ENCODE measurements at regions of chr5 and their contacts with region 1.

Region 1: DNA sequence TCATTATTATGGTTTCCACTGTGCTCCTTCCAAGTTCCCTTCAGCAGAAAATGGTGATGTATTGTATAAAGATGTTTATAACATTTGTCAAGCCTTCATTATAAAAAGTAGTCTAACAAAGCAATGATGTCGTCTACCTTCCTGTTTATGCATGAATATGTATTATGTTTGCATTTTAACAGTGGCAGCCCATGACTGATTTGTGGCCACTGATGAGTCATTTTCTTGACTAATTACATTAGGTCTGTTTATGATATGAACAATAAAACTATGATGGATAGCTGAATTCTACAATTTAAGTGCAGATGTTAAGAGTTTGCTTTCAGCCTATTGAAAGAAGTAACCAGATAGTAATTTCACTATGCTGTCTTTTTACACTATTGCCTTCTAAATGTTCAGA is 75.4 kb upstream of the ADAMTS19 start:
- DNase-seq: peak; percentile 25
- H3K4me3 Mint-ChIP-seq: no peak overlapping the region
- H3K27ac Mint-ChIP-seq: no peak overlapping the region
- H3K4me1 Mint-ChIP-seq: no peaks in the 10 kb centered on the region
- H3K27me3 Mint-ChIP-seq: peaks cover 14% of the 10 kb centered on the region
- CTCF ChIP-seq: no peak

Region 2: DNA sequence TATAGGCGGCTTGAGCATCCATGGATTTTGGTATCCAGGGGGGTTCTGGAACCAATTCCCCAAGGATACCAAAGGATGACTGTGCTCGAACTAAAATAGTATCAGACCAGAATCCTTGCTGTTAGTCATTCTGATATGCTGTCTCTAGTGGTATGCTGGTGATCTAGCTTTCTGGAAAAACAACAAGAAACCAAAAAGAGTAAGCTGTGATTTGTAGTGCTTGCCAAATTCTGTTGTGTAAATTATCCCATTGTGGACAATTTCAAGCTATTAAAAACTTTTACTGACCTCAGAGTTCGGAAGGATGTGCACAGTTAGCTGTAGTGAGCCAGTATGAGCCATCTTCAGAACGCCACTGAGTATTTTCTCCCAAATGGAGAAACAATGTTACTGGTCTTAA is 747.7 kb before region 1 on chr5:
- CTCF ChIA-PET with region 1: no interaction called
- POLR2A ChIA-PET with region 1: no interaction called
- intact Hi-C with region 1: no loop called
- DNase-seq: no peak
- H3K4me3 Mint-ChIP-seq: no peak overlapping the region
- H3K27ac Mint-ChIP-seq: no peak overlapping the region
- H3K4me1 Mint-ChIP-seq: peaks cover 5% of the 10 kb centered on the region
- H3K27me3 Mint-ChIP-seq: no peaks in the 10 kb centered on the region
- CTCF ChIP-seq: no peak

Region 3: DNA sequence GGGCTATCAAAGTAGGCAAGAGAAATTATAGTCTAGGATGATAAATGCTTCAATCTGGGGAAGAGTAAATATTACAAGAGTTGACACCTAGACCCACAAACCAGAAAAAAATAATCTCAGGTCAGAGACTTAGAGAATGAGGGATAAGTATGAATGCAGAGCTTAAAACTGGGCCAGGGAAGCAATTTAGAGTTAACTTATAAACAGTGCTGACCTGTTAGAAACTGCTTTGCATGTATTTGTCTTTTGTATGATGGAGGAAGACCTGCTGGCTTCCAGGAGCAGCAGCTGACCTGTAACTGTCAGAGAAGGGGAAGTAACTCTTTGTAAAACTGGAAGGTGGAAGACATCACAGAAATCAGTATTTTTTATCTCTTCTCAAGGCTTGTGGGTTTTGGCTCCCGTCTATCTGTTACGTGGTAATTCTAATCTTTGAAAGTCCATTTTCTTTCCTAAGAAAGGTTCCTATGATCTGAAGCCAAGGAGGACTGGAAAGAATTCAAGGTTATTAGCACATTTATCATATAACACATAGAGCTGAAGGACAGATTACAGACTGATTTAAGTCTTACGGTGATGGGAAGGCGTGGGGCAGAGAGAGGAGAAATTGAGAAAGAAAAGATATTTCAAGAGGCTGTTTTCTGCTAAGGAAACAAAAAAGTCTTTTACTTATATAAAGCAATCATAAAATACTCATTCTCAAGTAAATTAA is 39.4 kb before region 1 on chr5:
- CTCF ChIA-PET with region 1: no interaction called
- POLR2A ChIA-PET with region 1: no interaction called
- intact Hi-C with region 1: no loop called
- DNase-seq: no peak
- H3K4me3 Mint-ChIP-seq: no peak overlapping the region
- H3K27ac Mint-ChIP-seq: no peak overlapping the region
- H3K4me1 Mint-ChIP-seq: no peaks in the 10 kb centered on the region
- H3K27me3 Mint-ChIP-seq: peaks cover 70% of the 10 kb centered on the region
- CTCF ChIP-seq: no peak

Region 4: DNA sequence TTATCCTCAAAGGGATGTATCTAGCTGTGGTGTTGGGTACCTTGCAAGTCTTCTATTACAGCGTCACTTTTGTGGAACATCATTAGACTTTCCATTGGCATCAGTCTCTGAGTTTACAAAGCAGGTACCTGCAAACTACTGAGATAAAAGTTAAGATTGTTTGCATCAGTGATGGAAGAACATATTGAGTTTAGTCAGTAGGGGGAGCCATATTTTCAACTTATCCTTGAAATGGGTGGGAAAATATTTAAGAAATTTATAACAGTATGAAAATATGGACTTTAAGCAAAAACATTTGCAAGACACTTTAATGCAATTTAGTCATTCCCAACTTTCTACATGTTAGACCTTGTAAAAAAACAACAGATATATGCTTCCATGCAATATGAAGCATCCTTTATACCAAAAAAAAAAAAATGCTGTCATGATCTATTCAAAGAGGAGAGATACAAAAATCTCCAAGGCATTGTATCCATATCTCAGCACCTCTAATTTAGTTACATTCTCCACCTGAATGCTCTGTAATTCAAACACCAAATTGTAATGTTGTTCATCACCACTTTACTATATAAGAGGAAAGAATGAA is 23.2 kb before region 1 on chr5:
- CTCF ChIA-PET with region 1: interaction called, 12 read pairs
- POLR2A ChIA-PET with region 1: interaction called, 3 read pairs
- intact Hi-C with region 1: no loop called
- DNase-seq: peak; percentile 47
- H3K4me3 Mint-ChIP-seq: no peak overlapping the region
- H3K27ac Mint-ChIP-seq: no peak overlapping the region
- H3K4me1 Mint-ChIP-seq: no peaks in the 10 kb centered on the region
- H3K27me3 Mint-ChIP-seq: peaks cover 19% of the 10 kb centered on the region
- CTCF ChIP-seq: peak; percentile 62

Region 5: GRCh38 chr5:129400322-129400983 is 15.7 kb after region 1 on chr5:
- CTCF ChIA-PET with region 1: interaction called, 13 read pairs
- POLR2A ChIA-PET with region 1: interaction called, 4 read pairs
- intact Hi-C with region 1: no loop called
- DNase-seq: peak; percentile 25
- H3K4me3 Mint-ChIP-seq: no peak overlapping the region
- H3K27ac Mint-ChIP-seq: no peak overlapping the region
- H3K4me1 Mint-ChIP-seq: no peaks in the 10 kb centered on the region
- H3K27me3 Mint-ChIP-seq: peaks cover 99% of the 10 kb centered on the region
- CTCF ChIP-seq: peak; percentile 40

Region 6: GRCh38 chr5:129691220-129691619 is 306.5 kb after region 1 on chr5:
- CTCF ChIA-PET with region 1: no interaction called
- POLR2A ChIA-PET with region 1: no interaction called
- intact Hi-C with region 1: no loop called
- DNase-seq: no peak
- H3K4me3 Mint-ChIP-seq: no peak overlapping the region
- H3K27ac Mint-ChIP-seq: no peak overlapping the region
- H3K4me1 Mint-ChIP-seq: no peaks in the 10 kb centered on the region
- H3K27me3 Mint-ChIP-seq: no peaks in the 10 kb centered on the region
- CTCF ChIP-seq: no peak

Measured in MCF 10A (cell line).